Natural killer cell (primary cell): ENCODE measurements at regions of chr18 and their contacts with region 1.

Region 1: GRCh38 chr18:2571200-2572143 is at the starts of genes METTL4 and NDC80:
- DNase-seq: peak; percentile 87 to 94
- ATAC-seq: peak; percentile 87 to 91 (median 90)
- H3K4me3 ChIP-seq: peak within 1 kb of the TSS; percentile 75
- H3K4me3 Mint-ChIP-seq: peak within 1 kb of the TSS; percentile 98
- H3K27ac ChIP-seq: peak within 1 kb of the TSS; percentile 96
- H3K27ac Mint-ChIP-seq: peak within 1 kb of the TSS; percentile 99 to 100
- H3K4me1 ChIP-seq: peaks cover 20% of the 10 kb centered on the region
- H3K4me1 Mint-ChIP-seq: peaks cover 42 to 47% of the 10 kb centered on the region in 2 donors
- H3K27me3 ChIP-seq: no peaks in the 10 kb centered on the region
- H3K27me3 Mint-ChIP-seq: no peaks in the 10 kb centered on the region
- CTCF ChIP-seq: no peak
- total RNA-seq, gene METTL4: 9.1 to 11.3 (median 10.6) TPM
- total RNA-seq, gene NDC80: 3.4 to 6.5 (median 5.5) TPM

Region 2: GRCh38 chr18:2606335-2606734 is 34.9 kb after region 1 on chr18:
- intact Hi-C with region 1: loop called (anchors 1 kb)
- DNase-seq: peak in 1 of 2 donors; percentile 60
- ATAC-seq: peak; percentile 39 to 49 (median 39)
- H3K4me3 ChIP-seq: no peak overlapping the region
- H3K4me3 Mint-ChIP-seq: peak overlapping the region; percentile 74
- H3K27ac ChIP-seq: peak overlapping the region; percentile 70
- H3K27ac Mint-ChIP-seq: peak overlapping the region; percentile 89 to 92
- H3K4me1 ChIP-seq: peaks cover 3% of the 10 kb centered on the region
- H3K4me1 Mint-ChIP-seq: peaks cover 20 to 21% of the 10 kb centered on the region in 2 donors
- H3K27me3 ChIP-seq: no peaks in the 10 kb centered on the region
- H3K27me3 Mint-ChIP-seq: no peaks in the 10 kb centered on the region
- CTCF ChIP-seq: no peak

Region 3: DNA sequence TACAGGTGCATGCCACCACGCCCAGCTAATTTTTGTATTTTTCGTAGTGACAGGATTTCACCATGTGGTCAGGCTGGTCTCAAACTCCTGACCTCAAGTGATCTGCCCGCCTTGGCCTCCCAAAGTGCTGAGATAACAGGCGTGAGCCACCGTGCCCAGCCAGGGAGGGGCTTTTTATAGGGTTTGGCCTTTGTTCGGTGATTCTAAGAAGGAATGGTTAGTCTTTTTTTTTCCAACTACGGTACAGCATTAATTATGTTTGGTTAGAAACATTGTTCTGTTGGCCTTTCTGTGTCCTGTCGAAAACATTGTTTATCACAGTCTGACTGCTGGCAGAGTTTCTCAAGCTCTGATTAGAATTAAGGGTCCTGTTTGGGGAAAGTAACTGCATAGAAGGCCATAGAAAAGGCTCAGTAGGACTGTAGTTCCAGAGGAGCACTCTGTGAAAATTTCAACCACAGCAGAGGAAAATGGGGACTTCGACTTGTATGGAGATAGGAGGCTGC is 64.7 kb after region 1 on chr18:
- intact Hi-C with region 1: loop called (anchors 2 kb)
- DNase-seq: peak in 1 of 2 donors; percentile 31
- ATAC-seq: peak; percentile 33 to 40 (median 35)
- H3K4me3 ChIP-seq: peak overlapping the region; percentile 1
- H3K4me3 Mint-ChIP-seq: peak overlapping the region; percentile 92
- H3K27ac ChIP-seq: peak overlapping the region; percentile 92
- H3K27ac Mint-ChIP-seq: peak overlapping the region; percentile 97 to 100
- H3K4me1 ChIP-seq: peaks cover 50% of the 10 kb centered on the region
- H3K4me1 Mint-ChIP-seq: peaks cover 56 to 60% of the 10 kb centered on the region in 2 donors
- H3K27me3 ChIP-seq: no peaks in the 10 kb centered on the region
- H3K27me3 Mint-ChIP-seq: no peaks in the 10 kb centered on the region
- CTCF ChIP-seq: no peak

Region 4: DNA sequence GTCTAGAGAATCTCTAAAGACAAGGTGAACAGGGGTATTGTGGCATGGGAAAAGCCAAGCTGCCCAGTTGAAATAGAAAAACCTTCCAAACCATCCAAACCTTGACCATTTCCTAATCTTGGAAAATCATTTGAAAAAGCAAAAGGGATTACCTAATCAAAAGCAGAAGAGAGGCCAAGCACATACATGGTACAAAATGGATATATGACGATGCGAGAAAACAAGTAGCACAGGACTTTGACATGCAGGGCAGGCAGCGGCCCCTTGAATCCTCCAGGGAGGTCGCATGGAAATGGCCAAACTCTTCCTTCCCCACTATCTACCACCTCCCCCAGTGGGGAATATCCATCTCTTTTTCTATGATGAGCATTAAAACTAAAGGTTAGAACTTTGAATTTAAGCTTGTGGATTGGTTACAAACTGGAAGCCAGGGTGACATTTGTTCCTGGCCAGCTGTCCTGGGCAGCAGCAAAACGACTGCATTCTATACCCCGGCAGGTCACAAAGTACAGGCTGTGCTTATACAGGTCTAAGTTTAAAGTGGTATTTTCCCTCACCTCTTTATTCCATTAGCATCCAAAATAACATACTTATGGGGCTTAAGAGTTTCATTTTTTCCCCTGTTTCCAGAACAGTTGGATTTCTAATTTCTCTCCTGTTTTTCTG is 623.6 kb after region 1 on chr18:
- intact Hi-C with region 1: no loop called
- DNase-seq: no peak
- ATAC-seq: no peak
- H3K4me3 ChIP-seq: no peak overlapping the region
- H3K4me3 Mint-ChIP-seq: no peak overlapping the region
- H3K27ac ChIP-seq: no peak overlapping the region
- H3K27ac Mint-ChIP-seq: no peak overlapping the region
- H3K4me1 ChIP-seq: no peaks in the 10 kb centered on the region
- H3K4me1 Mint-ChIP-seq: no peaks in the 10 kb centered on the region
- H3K27me3 ChIP-seq: no peaks in the 10 kb centered on the region
- H3K27me3 Mint-ChIP-seq: no peaks in the 10 kb centered on the region
- CTCF ChIP-seq: no peak

Region 5: DNA sequence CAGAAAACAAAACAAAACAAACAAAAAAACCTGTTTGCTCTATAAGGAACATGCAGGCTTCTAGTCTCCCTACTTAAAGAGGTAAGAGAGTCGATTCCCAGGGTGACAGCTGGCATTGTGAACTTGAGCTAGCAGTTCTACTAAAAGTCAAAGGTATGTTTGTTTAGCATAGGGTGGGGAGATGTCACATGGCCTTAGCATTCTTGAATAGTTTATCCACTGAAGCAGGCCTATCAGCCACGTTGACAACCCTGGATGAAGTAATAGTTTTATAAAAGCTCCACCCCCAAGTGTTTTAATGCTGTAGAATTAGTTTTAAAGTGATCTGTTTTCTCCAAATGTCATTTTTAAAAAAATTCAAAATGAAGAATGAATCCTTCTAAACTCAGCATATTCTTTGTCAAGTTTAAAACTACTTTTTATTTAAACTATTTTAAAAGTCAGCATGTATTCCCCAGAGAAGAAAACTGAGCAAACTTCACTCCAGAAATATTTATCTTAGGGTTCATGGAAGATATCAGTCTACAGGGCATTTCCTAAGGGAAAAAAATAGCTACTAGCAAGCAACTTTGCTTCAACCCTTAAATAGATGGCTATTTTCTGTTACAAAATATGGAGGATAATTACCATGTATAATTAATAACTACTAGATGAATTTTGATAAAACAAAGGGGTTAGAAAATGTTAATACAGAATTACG is 646.6 kb after region 1 on chr18:
- intact Hi-C with region 1: no loop called
- DNase-seq: no peak
- ATAC-seq: no peak
- H3K4me3 ChIP-seq: no peak overlapping the region
- H3K4me3 Mint-ChIP-seq: no peak overlapping the region
- H3K27ac ChIP-seq: no peak overlapping the region
- H3K27ac Mint-ChIP-seq: no peak overlapping the region
- H3K4me1 ChIP-seq: no peaks in the 10 kb centered on the region
- H3K4me1 Mint-ChIP-seq: peaks cover 4 to 11% of the 10 kb centered on the region in 2 donors
- H3K27me3 ChIP-seq: no peaks in the 10 kb centered on the region
- H3K27me3 Mint-ChIP-seq: no peaks in the 10 kb centered on the region
- CTCF ChIP-seq: no peak